HCT116 (cell line): ENCODE measurements at regions of chr19 and their contacts with region 1.

Region 1: DNA sequence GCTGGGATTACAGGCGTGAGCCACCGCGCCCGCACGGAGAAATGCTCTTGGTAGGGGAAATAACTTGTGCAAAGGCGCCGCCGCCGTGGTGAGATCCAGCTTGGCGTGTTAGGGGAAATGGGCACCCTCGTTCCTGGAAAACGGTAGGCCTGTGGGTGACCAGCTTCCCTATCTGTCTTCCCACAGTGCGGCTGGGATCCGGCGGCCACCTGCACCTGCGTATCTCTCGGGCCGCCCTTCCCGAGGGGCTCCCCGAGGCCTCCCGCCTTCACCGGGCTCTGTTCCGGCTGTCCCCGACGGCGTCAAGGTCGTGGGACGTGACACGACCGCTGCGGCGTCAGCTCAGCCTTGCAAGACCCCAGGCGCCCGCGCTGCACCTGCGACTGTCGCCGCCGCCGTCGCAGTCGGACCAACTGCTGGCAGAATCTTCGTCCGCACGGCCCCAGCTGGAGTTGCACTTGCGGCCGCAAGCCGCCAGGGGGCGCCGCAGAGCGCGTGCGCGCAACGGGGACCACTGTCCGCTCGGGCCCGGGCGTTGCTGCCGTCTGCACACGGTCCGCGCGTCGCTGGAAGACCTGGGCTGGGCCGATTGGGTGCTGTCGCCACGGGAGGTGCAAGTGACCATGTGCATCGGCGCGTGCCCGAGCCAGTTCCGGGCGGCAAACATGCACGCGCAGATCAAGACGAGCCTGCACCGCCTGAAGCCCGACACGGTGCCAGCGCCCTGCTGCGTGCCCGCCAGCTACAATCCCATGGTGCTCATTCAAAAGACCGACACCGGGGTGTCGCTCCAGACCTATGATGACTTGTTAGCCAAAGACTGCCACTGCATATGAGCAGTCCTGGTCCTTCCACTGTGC is 2.4 kb downstream of the GDF15 start:
- DNase-seq: no peak
- ATAC-seq: peak; percentile 73
- H3K4me3 ChIP-seq: peak overlapping the region; percentile 71 to 91
- H3K27ac ChIP-seq: peak overlapping the region; percentile 82
- H3K4me1 ChIP-seq: peaks cover 40 to 79% of the 10 kb centered on the region in 2 experiments
- H3K27me3 ChIP-seq: no peaks in the 10 kb centered on the region
- CTCF ChIP-seq: peak; percentile 53 to 98 (median 88); a peak in 5 of 6 replicates
- POLR2A ChIP-seq: no peak
- RAD21 ChIP-seq: peak; percentile 55

Region 2: GRCh38 chr19:18274781-18275356 is 113.5 kb before region 1 on chr19:
- CTCF ChIA-PET with region 1: interaction called, 5 read pairs
- POLR2A ChIA-PET with region 1: interaction called, 25 read pairs
- RAD21 ChIA-PET with region 1: no interaction called
- intact Hi-C with region 1: no loop called
- DNase-seq: no peak
- ATAC-seq: peak; percentile 82
- H3K4me3 ChIP-seq: peak overlapping the region; percentile 1 to 47; a peak in 3 of 4 replicates
- H3K27ac ChIP-seq: peak overlapping the region; percentile 92
- H3K4me1 ChIP-seq: peaks cover 57 to 72% of the 10 kb centered on the region in 2 experiments
- H3K27me3 ChIP-seq: no peaks in the 10 kb centered on the region
- CTCF ChIP-seq: no peak
- POLR2A ChIP-seq: no peak
- RAD21 ChIP-seq: no peak

Region 3: GRCh38 chr19:18364826-18365528 is 23.4 kb before region 1 on chr19:
- CTCF ChIA-PET with region 1: interaction called, 5 read pairs
- POLR2A ChIA-PET with region 1: interaction called, 58 read pairs
- RAD21 ChIA-PET with region 1: no interaction called
- intact Hi-C with region 1: no loop called
- DNase-seq: peak; percentile 96
- ATAC-seq: peak; percentile 71
- H3K4me3 ChIP-seq: peak overlapping the region in 1 of 2 experiments; percentile 22; a peak in 2 of 4 replicates
- H3K27ac ChIP-seq: peak overlapping the region; percentile 99
- H3K4me1 ChIP-seq: peaks cover 51 to 66% of the 10 kb centered on the region in 2 experiments
- H3K27me3 ChIP-seq: no peaks in the 10 kb centered on the region
- CTCF ChIP-seq: no peak
- POLR2A ChIP-seq: no peak
- RAD21 ChIP-seq: no peak

Region 4: GRCh38 chr19:18401580-18402112 is 13.3 kb after region 1 on chr19:
- CTCF ChIA-PET with region 1: interaction called, 4 read pairs
- POLR2A ChIA-PET with region 1: interaction called, 11 read pairs
- RAD21 ChIA-PET with region 1: no interaction called
- intact Hi-C with region 1: no loop called
- DNase-seq: no peak
- ATAC-seq: peak; percentile 83
- H3K4me3 ChIP-seq: no peak overlapping the region
- H3K27ac ChIP-seq: peak overlapping the region; percentile 35; the same call in 1 of the 2 replicates
- H3K4me1 ChIP-seq: peaks cover 9 to 22% of the 10 kb centered on the region in 2 experiments
- H3K27me3 ChIP-seq: no peaks in the 10 kb centered on the region
- CTCF ChIP-seq: peak in 2 of 3 experiments; percentile 31 to 40; a peak in 4 of 6 replicates
- POLR2A ChIP-seq: no peak
- RAD21 ChIP-seq: 0 out of 2 replicates have a peak, but pooled peaks have one; percentile 28

Region 5: DNA sequence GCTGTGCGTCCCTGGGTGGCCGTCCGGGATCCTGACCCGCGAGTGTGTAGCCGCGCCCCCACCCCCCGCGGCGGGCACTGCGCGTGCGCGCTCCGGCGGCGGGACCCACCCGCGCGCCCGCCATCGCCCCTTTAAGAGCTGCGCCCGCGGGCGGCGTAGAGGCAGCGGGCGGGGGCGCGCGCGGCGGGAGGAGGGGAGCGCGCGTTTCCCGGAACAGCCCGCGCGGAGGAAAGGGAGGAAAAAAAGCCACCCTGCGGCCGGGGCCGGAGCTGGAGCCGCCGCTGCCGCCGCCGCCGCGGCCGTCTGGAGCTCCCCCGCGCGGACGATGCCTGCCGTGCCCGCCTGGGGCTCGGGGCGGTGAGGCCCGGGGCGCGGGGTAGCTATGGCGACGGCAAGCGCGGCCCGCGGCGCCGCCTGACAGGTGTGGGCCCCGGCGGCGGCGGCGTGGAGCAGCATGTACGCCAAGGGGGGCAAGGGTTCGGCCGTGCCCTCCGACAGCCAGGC is 30.9 kb after region 1 on chr19 and contains the start of gene SSBP4:
- CTCF ChIA-PET with region 1: interaction called, 11 read pairs
- POLR2A ChIA-PET with region 1: interaction called, 40 read pairs
- RAD21 ChIA-PET with region 1: no interaction called
- intact Hi-C with region 1: no loop called
- DNase-seq: no peak
- ATAC-seq: peak; percentile 12
- H3K4me3 ChIP-seq: peak within 1 kb of the TSS; percentile 65 to 92
- H3K27ac ChIP-seq: peak within 1 kb of the TSS; percentile 98
- H3K4me1 ChIP-seq: peaks cover 50 to 80% of the 10 kb centered on the region in 2 experiments
- H3K27me3 ChIP-seq: no peaks in the 10 kb centered on the region
- CTCF ChIP-seq: peak in 1 of 3 experiments; percentile 17; a peak in 1 of 6 replicates
- POLR2A ChIP-seq: no peak
- RAD21 ChIP-seq: no peak
- total RNA-seq, gene SSBP4: 164 TPM

Region 6: GRCh38 chr19:18557474-18558201 is 169.3 kb after region 1 on chr19 and contains the start of gene KXD1:
- CTCF ChIA-PET with region 1: no interaction called
- POLR2A ChIA-PET with region 1: no interaction called
- RAD21 ChIA-PET with region 1: no interaction called
- intact Hi-C with region 1: no loop called
- DNase-seq: peak; percentile 99
- ATAC-seq: peak; percentile 97
- H3K4me3 ChIP-seq: peak within 1 kb of the TSS; percentile 89 to 100
- H3K27ac ChIP-seq: peak within 1 kb of the TSS; percentile 79
- H3K4me1 ChIP-seq: peaks cover 4 to 22% of the 10 kb centered on the region in 2 experiments; a peak in 3 of 4 replicates
- H3K27me3 ChIP-seq: no peaks in the 10 kb centered on the region
- CTCF ChIP-seq: no peak
- POLR2A ChIP-seq: peak; percentile 55
- RAD21 ChIP-seq: no peak
- total RNA-seq, gene KXD1: 139 TPM